ENCODE measurements at regions of chr2 and their contacts with region 1.

Region 1: GRCh38 chr2:198036029-198036879 is 231.9 kb downstream of the PLCL1 start:
- DNase-seq: no peak
- H3K4me3 ChIP-seq: no peak overlapping the region
- CTCF ChIP-seq: no peak
- POLR2A ChIP-seq: no peak

Region 2: GRCh38 chr2:197657562-197657961 is 378.7 kb before region 1 on chr2:
- intact Hi-C with region 1: loop called (anchors 5 kb)
- DNase-seq: no peak
- H3K4me3 ChIP-seq: no peak overlapping the region
- CTCF ChIP-seq: no peak
- POLR2A ChIP-seq: no peak

Region 3: DNA sequence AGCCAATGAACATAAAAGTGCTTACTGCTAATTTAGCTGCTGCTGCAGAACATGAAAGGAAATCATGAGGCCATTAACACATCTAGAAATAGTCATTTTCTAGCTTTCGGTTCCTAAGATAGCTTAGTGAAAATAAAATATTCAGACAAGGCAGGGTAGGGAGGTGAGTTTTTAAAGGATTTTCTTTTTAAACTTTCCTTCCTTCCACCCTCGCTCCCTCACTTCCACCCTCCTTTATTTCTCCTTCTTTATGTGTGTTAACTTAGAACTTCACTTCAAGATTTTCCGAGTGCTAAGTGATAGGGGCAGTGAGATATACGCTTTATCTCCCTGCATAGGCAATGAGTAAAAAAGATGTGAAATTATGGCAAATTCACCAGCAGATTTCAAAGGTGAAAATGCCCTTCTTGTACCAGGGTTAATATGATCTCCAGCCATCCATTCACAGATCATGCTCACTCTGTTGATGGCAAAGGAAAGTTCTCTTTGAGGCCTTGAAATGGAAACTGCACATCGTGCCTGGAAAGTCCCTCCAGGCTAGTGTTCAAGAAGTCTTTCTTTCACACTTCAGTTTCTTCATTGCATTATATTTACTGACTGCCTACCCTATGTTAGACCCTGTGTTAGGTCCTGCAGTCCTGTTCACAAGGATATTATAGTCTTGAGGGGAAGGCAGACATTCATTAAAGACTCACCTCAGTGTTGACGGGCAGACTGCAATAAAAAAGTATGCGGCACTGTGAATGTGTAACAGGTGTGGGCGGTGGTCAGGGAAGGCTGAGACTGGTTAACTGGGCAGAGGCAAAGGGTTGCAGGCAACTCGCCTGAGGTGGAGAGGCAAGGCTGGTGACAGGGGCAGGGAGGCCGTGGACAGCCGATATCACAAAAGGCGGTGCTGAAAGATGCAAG is 31.1 kb before region 1 on chr2:
- intact Hi-C with region 1: no loop called
- DNase-seq: no peak
- H3K4me3 ChIP-seq: no peak overlapping the region
- CTCF ChIP-seq: no peak
- POLR2A ChIP-seq: no peak